HAP-1 (cell line): ENCODE measurements at regions of chr15 and their contacts with region 1.

Region 1: GRCh38 chr15:70679919-70680231 is 83.5 kb downstream of the UACA start:
- DNase-seq: no peak
- H3K4me3 ChIP-seq: no peak overlapping the region
- H3K4me1 ChIP-seq: peaks cover 8% of the 10 kb centered on the region
- H3K27me3 ChIP-seq: no peaks in the 10 kb centered on the region

Region 2: GRCh38 chr15:70799667-70800450 is 120.0 kb after region 1 on chr15:
- in situ Hi-C with region 1: loop called (anchors 10 kb)
- DNase-seq: no peak
- H3K4me3 ChIP-seq: no peak overlapping the region
- H3K4me1 ChIP-seq: no peaks in the 10 kb centered on the region
- H3K27me3 ChIP-seq: no peaks in the 10 kb centered on the region